Activated naive CD4-positive, alpha-beta T cell treated with anti-CD3 and anti-CD28 coated beads for 36 hours (primary cell): ENCODE measurements at regions of chr12 and their contacts with region 1.

Region 1: GRCh38 chr12:40107098-40107802 is 1.4 kb upstream of the SLC2A13 start:
- DNase-seq: peak; percentile 94
- H3K4me3 Mint-ChIP-seq: peak overlapping the region; percentile 53
- H3K27ac Mint-ChIP-seq: no peak overlapping the region
- H3K4me1 Mint-ChIP-seq: peaks cover 37% of the 10 kb centered on the region
- H3K27me3 Mint-ChIP-seq: no peaks in the 10 kb centered on the region

Region 2: GRCh38 chr12:38138225-38139221 is 1968.7 kb before region 1 on chr12:
- CTCF ChIA-PET with region 1: no interaction called
- intact Hi-C with region 1: loop called (anchors 5 kb)
- DNase-seq: peak; percentile 73
- H3K4me3 Mint-ChIP-seq: peak overlapping the region; percentile 61
- H3K27ac Mint-ChIP-seq: no peak overlapping the region
- H3K4me1 Mint-ChIP-seq: peaks cover 3% of the 10 kb centered on the region
- H3K27me3 Mint-ChIP-seq: peaks cover 6% of the 10 kb centered on the region

Region 3: DNA sequence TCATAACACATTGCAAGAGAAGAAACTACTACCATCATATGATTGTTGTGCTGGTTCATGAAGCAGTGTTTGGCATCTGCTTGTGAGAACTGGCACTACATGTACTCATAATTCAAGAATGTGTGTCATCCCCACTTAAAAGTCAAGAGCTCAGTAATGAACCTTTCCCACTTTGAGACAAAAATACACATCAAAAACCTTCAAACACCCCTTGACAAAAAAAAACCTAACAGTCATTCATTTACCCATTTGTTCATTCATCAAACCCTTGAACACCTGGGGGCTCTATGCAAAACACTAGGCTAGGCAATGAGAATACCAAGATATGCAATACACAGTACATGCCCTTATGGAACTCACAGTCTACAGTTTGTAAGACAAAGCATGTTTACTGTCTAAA is 704.3 kb before region 1 on chr12:
- CTCF ChIA-PET with region 1: no interaction called
- intact Hi-C with region 1: loop called (anchors 5 kb)
- DNase-seq: peak; percentile 18
- H3K4me3 Mint-ChIP-seq: no peak overlapping the region
- H3K27ac Mint-ChIP-seq: no peak overlapping the region
- H3K4me1 Mint-ChIP-seq: peaks cover 15% of the 10 kb centered on the region
- H3K27me3 Mint-ChIP-seq: no peaks in the 10 kb centered on the region

Region 4: DNA sequence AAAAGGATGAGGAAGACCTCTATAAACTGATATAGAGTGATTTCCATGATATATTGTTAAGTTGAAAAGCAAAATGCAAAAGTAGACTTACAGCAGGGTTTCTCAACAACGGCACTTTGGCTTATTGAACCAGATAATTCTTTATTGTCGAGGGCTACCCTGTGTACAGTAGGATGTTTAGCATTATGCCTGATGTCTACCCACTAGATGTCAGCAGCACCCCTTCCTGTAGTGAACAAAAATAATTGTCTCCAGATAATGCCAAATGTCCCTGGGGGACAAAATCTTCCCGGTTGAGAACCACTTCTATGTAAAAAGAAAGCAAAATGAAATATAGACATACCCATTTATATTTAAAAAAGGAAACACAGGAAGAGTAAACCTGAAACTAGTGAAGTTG is 520.0 kb before region 1 on chr12:
- CTCF ChIA-PET with region 1: no interaction called
- intact Hi-C with region 1: loop called (anchors 1 kb)
- DNase-seq: peak; percentile 38
- H3K4me3 Mint-ChIP-seq: no peak overlapping the region
- H3K27ac Mint-ChIP-seq: no peak overlapping the region
- H3K4me1 Mint-ChIP-seq: peaks cover 12% of the 10 kb centered on the region
- H3K27me3 Mint-ChIP-seq: no peaks in the 10 kb centered on the region

Region 5: DNA sequence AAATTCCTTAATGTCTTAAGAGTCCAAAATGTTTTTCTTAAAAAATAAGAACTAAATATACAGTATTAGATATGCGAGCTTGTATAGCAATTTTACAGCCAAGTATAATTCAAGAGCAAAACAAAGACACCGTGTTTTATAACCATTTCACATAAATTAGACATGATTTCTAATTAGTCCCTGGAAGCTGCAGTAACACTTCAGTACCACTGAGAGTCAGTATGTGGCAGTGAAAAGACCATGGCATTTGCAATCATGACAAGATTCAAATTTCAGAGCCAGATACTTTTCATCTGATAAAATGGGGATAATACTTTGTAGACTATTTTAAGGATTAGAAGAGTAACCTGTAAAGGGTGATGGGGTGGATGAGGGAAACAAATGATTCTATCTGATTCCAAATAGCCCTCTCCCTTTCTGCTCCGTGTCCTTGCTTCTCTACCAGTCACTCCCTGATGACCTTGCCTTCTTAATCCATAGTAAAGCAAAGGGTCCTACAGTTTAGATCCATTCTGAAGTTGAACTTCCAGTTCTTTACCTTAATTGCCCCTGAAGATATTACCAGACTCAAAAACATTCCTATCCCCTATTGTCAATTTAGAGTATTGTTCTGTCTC is 342.2 kb before region 1 on chr12:
- CTCF ChIA-PET with region 1: no interaction called
- intact Hi-C with region 1: loop called (anchors 1 kb)
- DNase-seq: no peak
- H3K4me3 Mint-ChIP-seq: no peak overlapping the region
- H3K27ac Mint-ChIP-seq: no peak overlapping the region
- H3K4me1 Mint-ChIP-seq: no peaks in the 10 kb centered on the region
- H3K27me3 Mint-ChIP-seq: no peaks in the 10 kb centered on the region

Region 6: GRCh38 chr12:40117818-40118217 is 10.6 kb after region 1 on chr12:
- CTCF ChIA-PET with region 1: interaction called, 48 read pairs
- intact Hi-C with region 1: loop called (anchors 1 kb)
- DNase-seq: no peak
- H3K4me3 Mint-ChIP-seq: no peak overlapping the region
- H3K27ac Mint-ChIP-seq: no peak overlapping the region
- H3K4me1 Mint-ChIP-seq: peaks cover 15% of the 10 kb centered on the region
- H3K27me3 Mint-ChIP-seq: peaks cover 22% of the 10 kb centered on the region

Region 7: GRCh38 chr12:40515041-40515816 is 408.0 kb after region 1 on chr12:
- CTCF ChIA-PET with region 1: no interaction called
- intact Hi-C with region 1: no loop called
- DNase-seq: no peak
- H3K4me3 Mint-ChIP-seq: no peak overlapping the region
- H3K27ac Mint-ChIP-seq: no peak overlapping the region
- H3K4me1 Mint-ChIP-seq: no peaks in the 10 kb centered on the region
- H3K27me3 Mint-ChIP-seq: no peaks in the 10 kb centered on the region